ENCODE measurements at regions of chr3 and their contacts with region 1.

Region 1: GRCh38 chr3:194315088-194315964 is 35.8 kb downstream of the CPN2 start:
- DNase-seq: peak; percentile 81
- H3K4me3 Mint-ChIP-seq: peak overlapping the region; percentile 73
- H3K27ac Mint-ChIP-seq: peak overlapping the region; percentile 76
- H3K4me1 Mint-ChIP-seq: peaks cover 55% of the 10 kb centered on the region
- H3K27me3 Mint-ChIP-seq: peaks cover 17% of the 10 kb centered on the region

Region 2: DNA sequence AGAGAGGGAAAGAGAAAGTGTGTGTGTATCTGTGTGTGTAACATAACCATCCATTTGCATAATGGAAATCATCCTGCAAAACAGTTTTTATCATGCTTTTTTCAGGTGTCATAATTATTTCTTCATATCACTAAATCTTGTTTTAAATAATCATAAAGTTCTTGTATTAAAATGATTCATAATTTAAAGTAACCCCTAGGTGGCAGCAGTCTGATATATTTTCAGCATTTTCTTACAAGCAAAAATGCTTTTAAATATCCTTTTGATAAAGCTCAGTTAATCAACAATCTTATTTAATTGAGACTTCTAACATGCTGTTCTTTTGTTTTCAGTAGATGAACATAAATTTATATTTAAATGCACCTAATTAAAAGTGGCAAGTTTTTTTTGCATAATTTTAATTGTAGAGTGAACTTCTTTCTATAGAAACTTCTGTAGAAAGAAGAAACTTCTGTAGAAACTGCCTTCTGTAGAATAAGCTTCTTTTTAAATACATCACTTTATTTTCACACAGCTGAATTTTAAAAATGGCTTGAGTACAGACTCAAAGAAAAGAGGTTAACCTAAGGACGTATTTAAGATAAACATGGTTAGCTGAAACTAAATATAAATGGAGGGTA is 649.8 kb before region 1 on chr3:
- CTCF ChIA-PET with region 1: interaction called, 12 read pairs
- POLR2A ChIA-PET with region 1: no interaction called
- DNase-seq: no peak
- H3K4me3 Mint-ChIP-seq: no peak overlapping the region
- H3K27ac Mint-ChIP-seq: no peak overlapping the region
- H3K4me1 Mint-ChIP-seq: no peaks in the 10 kb centered on the region
- H3K27me3 Mint-ChIP-seq: no peaks in the 10 kb centered on the region

Region 3: GRCh38 chr3:193780810-193781472 is 534.4 kb before region 1 on chr3:
- CTCF ChIA-PET with region 1: interaction called, 20 read pairs
- POLR2A ChIA-PET with region 1: no interaction called
- DNase-seq: peak; percentile 33
- H3K4me3 Mint-ChIP-seq: no peak overlapping the region
- H3K27ac Mint-ChIP-seq: no peak overlapping the region
- H3K4me1 Mint-ChIP-seq: peaks cover 17% of the 10 kb centered on the region
- H3K27me3 Mint-ChIP-seq: peaks cover 55% of the 10 kb centered on the region

Region 4: DNA sequence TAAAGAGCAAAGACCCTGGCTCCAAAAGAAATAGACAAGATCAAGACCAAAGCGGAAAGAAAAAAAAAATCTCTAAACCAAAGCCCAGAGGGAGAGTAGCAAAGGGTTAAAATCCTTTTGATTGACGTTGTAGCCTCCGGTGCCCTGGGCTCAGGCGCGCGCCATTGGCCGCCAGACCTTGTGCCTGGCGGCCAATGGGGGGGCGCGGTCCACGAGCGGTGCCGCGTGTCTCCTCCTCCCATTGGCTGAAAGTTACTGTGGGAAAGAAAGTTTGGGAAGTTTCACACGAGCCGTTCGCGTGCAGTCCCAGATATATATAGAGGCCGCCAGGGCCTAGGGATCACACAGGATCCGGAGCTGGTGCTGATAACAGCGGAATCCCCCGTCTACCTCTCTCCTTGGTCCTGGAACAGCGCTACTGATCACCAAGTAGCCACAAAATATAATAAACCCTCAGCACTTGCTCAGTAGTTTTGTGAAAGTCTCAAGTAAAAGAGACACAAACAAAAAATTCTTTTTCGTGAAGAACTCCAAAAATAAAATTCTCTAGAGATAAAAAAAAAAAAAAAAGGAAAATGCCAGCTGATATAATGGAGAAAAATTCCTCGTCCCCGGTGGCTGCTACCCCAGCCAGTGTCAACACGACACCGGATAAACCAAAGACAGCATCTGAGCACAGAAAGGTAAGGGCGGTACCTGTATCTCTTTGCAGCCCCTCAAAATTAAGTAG is 179.4 kb before region 1 on chr3 and contains the start of gene HES1:
- CTCF ChIA-PET with region 1: interaction called, 20 read pairs
- POLR2A ChIA-PET with region 1: interaction called, 4 read pairs
- DNase-seq: peak; percentile 45
- H3K4me3 Mint-ChIP-seq: peak within 1 kb of the TSS; percentile 85
- H3K27ac Mint-ChIP-seq: peak within 1 kb of the TSS; percentile 93
- H3K4me1 Mint-ChIP-seq: peaks cover 66% of the 10 kb centered on the region
- H3K27me3 Mint-ChIP-seq: peaks cover 80% of the 10 kb centered on the region
- total RNA-seq, gene HES1: 2.4 to 2.7 TPM

Region 5: GRCh38 chr3:194447161-194447560 is 131.8 kb after region 1 on chr3:
- CTCF ChIA-PET with region 1: no interaction called
- POLR2A ChIA-PET with region 1: no interaction called
- DNase-seq: no peak
- H3K4me3 Mint-ChIP-seq: no peak overlapping the region
- H3K27ac Mint-ChIP-seq: no peak overlapping the region
- H3K4me1 Mint-ChIP-seq: peaks cover 2% of the 10 kb centered on the region
- H3K27me3 Mint-ChIP-seq: no peaks in the 10 kb centered on the region